ENCODE measurements at regions of chr11 and their contacts with region 1.

Region 1: GRCh38 chr11:55714982-55715888 is 53.2 kb downstream of the OR4C6 start:
- DNase-seq: no peak
- ATAC-seq: peak; percentile 82
- H3K4me3 ChIP-seq: no peak overlapping the region
- H3K27ac ChIP-seq: no peak overlapping the region
- H3K4me1 ChIP-seq: no peaks in the 10 kb centered on the region
- H3K27me3 ChIP-seq: no peaks in the 10 kb centered on the region
- CTCF ChIP-seq: peak in 1 of 3 experiments; percentile 28; a peak in 1 of 6 replicates
- EP300 ChIP-seq: no peak
- POLR2A ChIP-seq: no peak
- RAD21 ChIP-seq: no peak

Region 2: GRCh38 chr11:55773138-55773537 is 57.9 kb after region 1 on chr11 and contains the start of gene OR5D13:
- CTCF ChIA-PET with region 1: no interaction called
- POLR2A ChIA-PET with region 1: no interaction called
- RAD21 ChIA-PET with region 1: no interaction called
- SMC1A ChIA-PET with region 1: no interaction called
- in situ Hi-C with region 1: loop called (anchors 10 kb)
- intact Hi-C with region 1: no loop called
- DNase-seq: no peak
- ATAC-seq: no peak
- H3K4me3 ChIP-seq: no peak within 1 kb of the TSS
- H3K27ac ChIP-seq: no peak within 1 kb of the TSS
- H3K4me1 ChIP-seq: no peaks in the 10 kb centered on the region
- H3K27me3 ChIP-seq: no peaks in the 10 kb centered on the region
- CTCF ChIP-seq: no peak
- EP300 ChIP-seq: no peak
- POLR2A ChIP-seq: no peak
- RAD21 ChIP-seq: no peak
- polyA plus RNA-seq, gene OR5D13: not detected

Region 3: DNA sequence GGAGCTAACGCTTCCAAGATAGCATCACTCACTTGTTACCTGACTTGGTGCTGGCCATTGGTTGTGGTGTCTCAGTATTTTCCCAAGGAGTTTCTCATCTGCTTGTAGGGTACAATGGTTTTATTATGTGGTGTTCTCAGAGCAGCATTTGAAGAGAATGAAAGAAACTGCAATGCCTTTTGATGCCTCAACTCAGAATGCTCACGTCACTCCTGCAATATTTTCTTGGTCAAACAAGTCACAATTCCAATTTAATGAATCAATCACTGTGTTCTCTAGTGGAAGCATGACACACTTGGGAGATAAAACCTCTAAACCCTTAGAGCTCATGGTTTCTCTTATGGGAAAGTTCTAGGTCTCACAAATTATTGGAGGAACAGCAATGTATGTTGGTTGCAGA is 78.1 kb after region 1 on chr11:
- CTCF ChIA-PET with region 1: no interaction called
- POLR2A ChIA-PET with region 1: no interaction called
- RAD21 ChIA-PET with region 1: no interaction called
- SMC1A ChIA-PET with region 1: no interaction called
- in situ Hi-C with region 1: no loop called
- intact Hi-C with region 1: no loop called
- DNase-seq: no peak
- ATAC-seq: no peak
- H3K4me3 ChIP-seq: no peak overlapping the region
- H3K27ac ChIP-seq: no peak overlapping the region
- H3K4me1 ChIP-seq: no peaks in the 10 kb centered on the region
- H3K27me3 ChIP-seq: no peaks in the 10 kb centered on the region
- CTCF ChIP-seq: no peak
- EP300 ChIP-seq: no peak
- POLR2A ChIP-seq: no peak
- RAD21 ChIP-seq: no peak

Region 4: GRCh38 chr11:55956521-55956920 is 241.3 kb after region 1 on chr11:
- CTCF ChIA-PET with region 1: no interaction called
- POLR2A ChIA-PET with region 1: no interaction called
- RAD21 ChIA-PET with region 1: no interaction called
- SMC1A ChIA-PET with region 1: no interaction called
- in situ Hi-C with region 1: no loop called
- intact Hi-C with region 1: loop called (anchors 5 kb)
- DNase-seq: no peak
- ATAC-seq: no peak
- H3K4me3 ChIP-seq: no peak overlapping the region
- H3K27ac ChIP-seq: no peak overlapping the region
- H3K4me1 ChIP-seq: no peaks in the 10 kb centered on the region
- H3K27me3 ChIP-seq: no peaks in the 10 kb centered on the region
- CTCF ChIP-seq: no peak
- EP300 ChIP-seq: no peak
- POLR2A ChIP-seq: no peak
- RAD21 ChIP-seq: no peak

Measured in GM12878 (cell line).